Naive thymus-derived CD8-positive, alpha-beta T cell (primary cell): ENCODE measurements at regions of chr19 and their contacts with region 1.

Region 1: DNA sequence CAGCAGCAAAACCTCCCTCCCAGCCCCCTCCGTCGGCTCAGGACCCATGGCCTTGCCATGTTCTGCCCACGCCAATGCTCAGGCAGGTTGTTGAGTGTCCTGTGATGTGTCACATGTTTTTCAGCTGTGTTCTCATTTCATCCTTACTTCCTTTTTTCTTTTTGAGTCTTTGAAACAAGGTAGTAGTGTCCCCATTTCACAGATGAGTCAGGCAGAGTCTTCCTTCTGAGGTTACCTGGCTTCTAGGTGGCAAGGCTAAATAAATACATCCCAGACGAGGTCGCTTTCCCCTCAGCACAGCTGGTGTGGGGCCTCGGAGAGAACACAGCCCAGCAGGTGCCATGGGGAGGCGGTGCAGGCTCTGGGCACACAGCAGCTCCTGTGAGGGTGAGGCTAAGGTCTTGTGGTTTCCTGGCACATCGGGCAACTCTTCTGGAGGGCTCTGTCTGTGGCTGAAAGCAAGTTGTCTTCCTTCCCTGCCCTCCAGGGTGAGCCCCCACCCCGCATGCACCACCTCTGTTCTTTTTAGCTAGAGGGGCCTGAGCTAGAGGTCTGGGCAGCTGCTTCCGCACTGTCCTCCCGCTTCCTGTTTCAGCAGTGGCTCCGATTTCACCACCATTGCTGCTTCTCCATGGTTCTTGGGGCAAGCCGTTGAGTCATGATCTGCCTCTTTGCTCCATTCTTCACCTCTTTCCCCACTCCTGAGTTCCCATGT is 15.1 kb downstream of the PRAM1 start:
- DNase-seq: peak in 9 of 10 donors; percentile 49 to 85 (median 70)
- ATAC-seq: peak; percentile 90 to 91
- H3K4me3 Mint-ChIP-seq: peak overlapping the region; percentile 48 to 86 (median 78)
- H3K27ac Mint-ChIP-seq: peak overlapping the region; percentile 79 to 94 (median 92)
- H3K4me1 Mint-ChIP-seq: peaks cover 34 to 56% (median 45%) of the 10 kb centered on the region in 4 donors
- H3K27me3 Mint-ChIP-seq: no peaks in the 10 kb centered on the region

Region 2: DNA sequence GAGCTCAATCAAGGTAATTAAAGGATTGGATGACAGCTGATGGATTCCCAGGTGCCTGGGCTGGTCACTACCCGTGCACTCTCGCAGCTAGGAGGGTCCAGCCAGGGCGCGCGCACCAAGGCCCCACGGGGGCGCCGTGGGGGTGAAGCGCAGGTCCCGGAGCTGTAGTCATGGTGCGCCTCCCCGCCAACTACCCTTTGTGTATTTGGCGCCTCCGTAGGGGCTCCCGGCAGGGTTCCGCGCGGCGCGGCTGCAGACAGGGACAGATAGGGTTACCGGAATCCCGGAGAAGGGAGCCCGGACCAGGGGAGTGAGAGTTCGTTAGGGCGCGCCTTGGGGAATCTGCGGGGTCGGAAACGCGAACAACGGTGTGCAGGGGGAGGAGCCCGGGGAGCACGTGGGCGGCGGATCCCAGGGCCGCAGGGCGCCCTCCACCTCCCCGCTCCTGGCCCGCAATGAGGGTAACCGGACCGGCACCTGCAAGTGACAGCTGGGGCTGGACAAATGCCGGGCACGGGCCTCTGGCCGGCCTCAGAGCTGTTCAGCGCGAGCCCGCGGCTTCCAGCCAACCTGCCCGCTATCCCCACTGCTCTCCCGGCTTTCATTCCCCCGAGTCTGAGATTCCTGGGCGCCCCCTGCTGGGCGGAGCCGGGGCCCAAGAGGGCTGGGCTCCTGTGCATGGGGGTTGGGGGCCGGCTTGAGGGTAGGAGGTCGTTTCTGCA is 18.5 kb after region 1 on chr19:
- POLR2A ChIA-PET with region 1: interaction called, 28 read pairs
- DNase-seq: peak; percentile 34 to 78 (median 64)
- ATAC-seq: peak; percentile 83 to 86
- H3K4me3 Mint-ChIP-seq: peak overlapping the region; percentile 90 to 97 (median 94)
- H3K27ac Mint-ChIP-seq: peak overlapping the region; percentile 68 to 95 (median 92)
- H3K4me1 Mint-ChIP-seq: peaks cover 14 to 38% (median 26%) of the 10 kb centered on the region in 4 donors
- H3K27me3 Mint-ChIP-seq: no peaks in the 10 kb centered on the region

Region 3: DNA sequence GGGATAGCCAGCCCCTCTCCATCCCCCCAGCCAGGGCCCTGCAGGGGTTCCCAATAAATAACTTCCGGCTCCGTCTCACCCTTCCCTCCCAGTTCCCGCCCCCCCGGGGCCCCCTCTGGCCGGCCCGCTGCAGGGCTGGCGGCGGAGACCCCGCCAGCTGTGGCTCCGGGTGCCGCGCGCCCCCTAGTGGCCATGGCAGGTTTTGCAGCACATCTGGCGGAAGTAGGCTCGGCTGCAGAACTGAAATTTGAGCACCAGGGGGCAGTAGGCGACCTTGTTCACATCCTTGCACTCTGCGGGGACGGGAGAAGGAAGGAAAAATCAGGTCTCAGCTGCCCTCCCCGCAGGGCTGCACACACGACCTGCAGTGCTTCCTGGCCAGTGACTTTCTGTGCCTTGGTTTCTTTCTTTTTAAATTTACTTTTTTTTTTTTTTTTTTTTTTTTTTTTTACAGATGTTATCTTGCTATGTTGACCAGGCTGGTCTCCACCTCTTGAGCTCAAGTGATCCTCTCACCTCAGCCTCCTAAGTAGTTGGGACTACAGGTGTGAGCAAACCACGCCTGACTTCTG is 93.5 kb after region 1 on chr19:
- POLR2A ChIA-PET with region 1: interaction called, 69 read pairs
- DNase-seq: peak; percentile 74 to 92 (median 86)
- ATAC-seq: peak; percentile 53 to 70
- H3K4me3 Mint-ChIP-seq: no peak overlapping the region
- H3K27ac Mint-ChIP-seq: peak overlapping the region in 2 of 10 donors; percentile 68 to 69
- H3K4me1 Mint-ChIP-seq: peaks cover 18 to 49% (median 41%) of the 10 kb centered on the region in 4 donors
- H3K27me3 Mint-ChIP-seq: no peaks in the 10 kb centered on the region